ENCODE measurements at regions of chr12 and their contacts with region 1.

Region 1: GRCh38 chr12:54398995-54399793 is 14.7 kb upstream of the ZNF385A start:
- DNase-seq: peak; percentile 95
- H3K4me3 Mint-ChIP-seq: no peak overlapping the region
- H3K27ac Mint-ChIP-seq: peak overlapping the region; percentile 21
- H3K4me1 Mint-ChIP-seq: peaks cover 8% of the 10 kb centered on the region
- H3K27me3 Mint-ChIP-seq: no peaks in the 10 kb centered on the region

Region 2: GRCh38 chr12:54140588-54141388 is 258.4 kb before region 1 on chr12:
- CTCF ChIA-PET with region 1: no interaction called
- intact Hi-C with region 1: no loop called
- DNase-seq: no peak
- H3K4me3 Mint-ChIP-seq: no peak overlapping the region
- H3K27ac Mint-ChIP-seq: no peak overlapping the region
- H3K4me1 Mint-ChIP-seq: no peaks in the 10 kb centered on the region
- H3K27me3 Mint-ChIP-seq: peaks cover 31% of the 10 kb centered on the region

Region 3: DNA sequence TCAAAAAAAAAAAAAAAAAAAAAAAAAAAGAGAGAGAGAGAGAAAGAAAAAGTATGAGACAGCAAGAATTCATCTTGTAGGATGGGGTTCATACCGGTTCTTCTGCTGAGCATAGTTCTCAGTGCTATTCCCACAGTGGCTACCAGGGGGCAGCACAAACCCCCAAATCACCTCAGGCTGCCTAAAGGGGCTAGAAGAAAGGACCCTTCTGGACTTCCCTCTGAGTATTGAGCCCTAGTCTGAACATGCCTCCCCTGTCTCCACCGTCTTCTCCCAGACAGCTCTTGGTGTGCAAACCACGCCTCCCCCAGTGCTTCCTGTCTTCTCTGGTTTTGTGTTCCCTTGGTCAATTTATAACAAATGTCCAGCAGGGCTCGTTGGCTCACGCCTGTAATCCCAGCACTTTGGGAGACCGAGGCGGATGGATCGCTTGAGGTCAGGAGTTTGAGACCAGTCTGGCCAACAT is 179.1 kb before region 1 on chr12:
- CTCF ChIA-PET with region 1: no interaction called
- intact Hi-C with region 1: no loop called
- DNase-seq: peak; percentile 84
- H3K4me3 Mint-ChIP-seq: no peak overlapping the region
- H3K27ac Mint-ChIP-seq: no peak overlapping the region
- H3K4me1 Mint-ChIP-seq: peaks cover 19% of the 10 kb centered on the region
- H3K27me3 Mint-ChIP-seq: peaks cover 4% of the 10 kb centered on the region

Region 4: DNA sequence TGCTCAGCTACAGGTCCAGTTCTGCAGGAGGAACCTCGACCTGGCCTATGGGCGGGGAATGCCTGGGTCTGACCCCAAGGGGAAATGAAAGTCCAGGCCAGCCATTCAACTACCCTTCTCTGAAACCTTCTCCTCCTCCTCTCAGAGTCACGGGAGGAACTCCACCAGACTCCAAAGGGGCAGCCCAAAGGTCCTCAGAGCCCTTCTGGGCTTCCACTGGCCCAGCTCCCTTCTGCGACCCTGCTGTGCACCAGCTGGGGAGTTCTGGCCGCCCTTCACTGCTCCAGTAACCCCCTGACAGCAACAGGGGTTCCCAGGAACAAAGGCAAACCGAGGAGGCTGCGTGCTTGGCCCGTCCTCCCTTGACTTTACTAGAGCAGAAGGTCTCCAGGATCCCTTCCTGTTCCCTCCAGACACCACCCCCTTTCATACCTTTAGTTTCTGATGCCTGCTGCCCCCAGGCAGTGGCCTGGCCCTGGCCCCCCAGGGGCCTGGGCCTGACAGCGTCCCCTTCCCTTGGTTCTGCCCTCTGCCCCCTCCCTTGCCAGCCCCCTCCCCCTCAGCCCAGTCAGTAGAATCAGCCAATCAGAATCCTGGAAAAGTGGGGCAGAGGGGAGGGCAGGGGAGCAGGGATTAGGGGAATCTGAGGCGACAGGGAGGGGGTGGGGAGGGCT is 13.8 kb before region 1 on chr12:
- CTCF ChIA-PET with region 1: interaction called, 45 read pairs
- intact Hi-C with region 1: no loop called
- DNase-seq: no peak
- H3K4me3 Mint-ChIP-seq: no peak overlapping the region
- H3K27ac Mint-ChIP-seq: no peak overlapping the region
- H3K4me1 Mint-ChIP-seq: peaks cover 16% of the 10 kb centered on the region
- H3K27me3 Mint-ChIP-seq: no peaks in the 10 kb centered on the region

Region 5: DNA sequence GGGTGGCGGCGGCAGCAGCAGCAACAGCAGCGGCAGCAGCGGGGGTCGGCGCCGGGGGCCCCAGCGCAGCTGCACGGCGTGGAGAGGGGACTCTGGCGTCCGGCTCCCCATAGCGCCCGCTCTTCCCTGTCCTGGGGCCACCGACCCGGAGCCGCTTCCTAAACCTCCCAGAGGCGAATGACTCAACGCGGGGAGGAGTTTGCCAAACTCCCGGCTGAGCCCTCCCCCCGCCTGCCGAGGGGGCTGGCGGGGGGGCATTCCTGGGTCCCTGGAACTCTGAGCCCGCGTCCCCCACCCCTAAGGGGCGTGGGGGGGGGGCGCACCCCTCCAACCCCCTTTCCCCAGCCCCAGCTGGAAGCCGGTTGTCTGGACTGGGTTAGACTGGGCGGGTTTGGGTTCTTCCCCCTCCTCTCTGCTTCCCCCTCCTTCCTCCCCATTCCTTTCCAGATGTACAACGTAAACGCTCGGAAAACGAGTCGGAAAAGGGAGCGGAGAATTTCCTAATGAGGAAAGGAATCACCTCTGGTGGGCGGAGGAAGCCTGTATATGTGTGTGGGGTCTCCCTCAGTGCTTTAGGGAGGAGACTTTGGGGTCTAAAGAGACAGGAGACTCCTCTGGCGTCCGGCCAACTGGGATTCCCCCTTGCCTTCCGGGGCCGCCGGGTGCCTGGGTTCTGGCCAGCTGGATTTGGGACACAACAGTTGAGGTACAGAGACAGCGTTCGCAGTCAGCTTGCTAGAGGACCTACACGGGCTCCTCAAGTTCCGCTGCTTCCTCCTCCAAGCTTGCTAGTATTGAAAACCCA is 20.1 kb after region 1 on chr12 and contains the start of gene ITGA5:
- CTCF ChIA-PET with region 1: interaction called, 257 read pairs
- intact Hi-C with region 1: no loop called
- DNase-seq: peak; percentile 59
- H3K4me3 Mint-ChIP-seq: peak within 1 kb of the TSS; percentile 95
- H3K27ac Mint-ChIP-seq: peak within 1 kb of the TSS; percentile 89
- H3K4me1 Mint-ChIP-seq: peaks cover 52% of the 10 kb centered on the region
- H3K27me3 Mint-ChIP-seq: no peaks in the 10 kb centered on the region
- total RNA-seq, gene ITGA5: 17.9 to 18.4 TPM

Region 6: GRCh38 chr12:54425702-54426101 is 26.5 kb after region 1 on chr12:
- CTCF ChIA-PET with region 1: interaction called, 257 read pairs
- intact Hi-C with region 1: no loop called
- DNase-seq: no peak
- H3K4me3 Mint-ChIP-seq: no peak overlapping the region
- H3K27ac Mint-ChIP-seq: no peak overlapping the region
- H3K4me1 Mint-ChIP-seq: peaks cover 13% of the 10 kb centered on the region
- H3K27me3 Mint-ChIP-seq: no peaks in the 10 kb centered on the region

Region 7: DNA sequence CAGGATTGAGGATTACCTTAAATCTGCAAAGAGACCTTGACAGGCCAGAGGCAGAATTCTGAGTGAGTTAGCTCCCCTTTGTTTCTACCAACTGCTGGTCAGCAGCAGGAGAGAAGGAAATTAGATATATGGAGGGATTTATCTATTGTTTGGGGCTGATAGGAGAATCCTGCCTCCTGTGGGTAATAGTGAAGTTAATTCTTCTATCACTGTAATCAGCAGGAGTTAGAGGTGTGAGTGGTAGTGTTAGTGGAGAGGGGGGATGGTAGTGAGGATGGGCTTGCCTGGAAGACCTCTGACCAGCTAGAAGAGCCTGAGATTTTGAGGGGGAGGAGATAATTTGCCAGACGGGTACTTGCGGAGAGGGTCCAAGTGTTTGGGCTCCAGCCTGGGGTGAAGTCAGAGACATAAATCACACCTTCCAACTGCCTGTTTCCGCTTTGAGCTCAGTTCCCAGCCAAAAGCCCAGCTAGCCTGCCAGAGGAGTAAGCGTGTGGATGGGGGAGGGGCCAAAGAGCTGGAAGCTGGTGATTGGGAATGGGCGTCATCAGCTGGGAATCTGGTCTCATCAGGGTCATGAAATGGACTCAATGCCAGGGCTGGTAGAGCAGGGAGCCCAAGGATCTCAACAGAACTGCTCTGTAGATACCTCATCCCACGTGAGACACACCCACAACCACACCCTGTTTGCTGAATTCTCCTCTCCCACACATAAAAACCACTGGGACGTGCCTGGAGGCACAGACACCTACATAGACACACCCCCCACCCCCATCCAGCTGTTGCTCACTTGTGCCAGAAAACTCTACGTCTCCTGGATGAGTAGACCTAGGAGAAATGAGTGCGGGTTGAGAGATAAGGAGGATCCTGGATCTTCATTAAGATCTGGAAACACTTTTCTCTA is 33.0 kb after region 1 on chr12:
- CTCF ChIA-PET with region 1: interaction called, 384 read pairs
- intact Hi-C with region 1: no loop called
- DNase-seq: no peak
- H3K4me3 Mint-ChIP-seq: no peak overlapping the region
- H3K27ac Mint-ChIP-seq: no peak overlapping the region
- H3K4me1 Mint-ChIP-seq: peaks cover 25% of the 10 kb centered on the region
- H3K27me3 Mint-ChIP-seq: no peaks in the 10 kb centered on the region

Region 8: DNA sequence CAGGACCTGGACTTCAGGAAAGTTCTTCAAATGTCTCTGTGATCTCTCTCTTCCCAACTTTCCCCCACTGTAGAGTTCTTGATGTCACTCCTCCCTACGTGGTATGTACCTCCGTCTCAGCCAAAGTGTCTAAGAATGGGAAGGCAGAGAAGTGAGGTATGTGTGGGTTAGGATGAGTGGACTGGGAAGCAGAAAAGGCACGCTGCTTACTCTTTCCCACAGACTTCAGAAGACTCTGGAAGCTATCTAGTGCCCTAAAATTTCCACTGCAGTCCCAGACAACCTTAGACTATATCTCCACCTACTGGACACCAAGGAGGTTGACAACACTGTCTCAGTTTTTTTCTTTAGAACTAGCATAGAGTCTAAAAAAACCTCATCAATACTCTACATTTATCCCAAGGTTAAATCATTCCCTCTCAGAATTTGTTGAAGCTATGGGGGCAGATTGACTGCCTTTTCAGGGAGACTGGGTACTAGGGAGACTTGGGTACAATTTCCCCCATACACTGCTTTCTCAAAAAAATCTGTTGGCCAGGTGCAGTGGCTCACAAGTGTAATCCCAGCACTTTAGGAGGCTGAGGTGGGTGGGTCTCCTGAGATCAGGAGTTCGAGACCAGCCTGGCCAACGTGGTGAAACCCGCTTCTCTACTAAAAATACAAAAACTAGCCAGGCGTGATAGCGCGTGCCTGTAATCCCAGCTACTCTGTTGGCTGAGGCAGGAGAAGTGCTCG is 40.5 kb after region 1 on chr12:
- CTCF ChIA-PET with region 1: interaction called, 384 read pairs
- intact Hi-C with region 1: loop called (anchors 1 kb)
- DNase-seq: no peak
- H3K4me3 Mint-ChIP-seq: no peak overlapping the region
- H3K27ac Mint-ChIP-seq: no peak overlapping the region
- H3K4me1 Mint-ChIP-seq: peaks cover 13% of the 10 kb centered on the region
- H3K27me3 Mint-ChIP-seq: no peaks in the 10 kb centered on the region

Region 9: DNA sequence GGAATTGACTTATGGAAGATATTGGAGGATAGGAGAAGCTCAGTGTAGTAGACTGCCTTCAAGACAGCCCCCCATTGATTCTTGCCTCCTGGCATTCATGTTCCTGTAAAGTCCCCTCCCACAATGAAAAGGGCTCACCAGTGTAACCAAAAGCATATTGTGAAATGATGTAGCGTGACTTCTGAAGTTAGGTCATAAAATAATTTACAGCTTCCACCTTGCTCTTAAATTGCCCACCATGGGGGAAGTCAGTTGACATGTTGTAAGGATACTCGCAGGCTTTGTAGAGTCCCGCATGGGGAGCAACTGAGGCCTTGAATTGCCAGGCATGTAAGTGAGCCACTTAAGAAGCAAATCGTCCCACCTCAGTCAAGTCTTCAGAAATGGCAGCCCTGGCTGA is 49.1 kb after region 1 on chr12:
- CTCF ChIA-PET with region 1: interaction called, 384 read pairs
- intact Hi-C with region 1: no loop called
- DNase-seq: no peak
- H3K4me3 Mint-ChIP-seq: no peak overlapping the region
- H3K27ac Mint-ChIP-seq: no peak overlapping the region
- H3K4me1 Mint-ChIP-seq: no peaks in the 10 kb centered on the region
- H3K27me3 Mint-ChIP-seq: no peaks in the 10 kb centered on the region

Measured in activated naive CD4-positive, alpha-beta T cell treated with anti-CD3 and anti-CD28 coated beads for 36 hours (primary cell).